MCF 10A (cell line): ENCODE measurements at regions of chr1 and their contacts with region 1.

Region 1: DNA sequence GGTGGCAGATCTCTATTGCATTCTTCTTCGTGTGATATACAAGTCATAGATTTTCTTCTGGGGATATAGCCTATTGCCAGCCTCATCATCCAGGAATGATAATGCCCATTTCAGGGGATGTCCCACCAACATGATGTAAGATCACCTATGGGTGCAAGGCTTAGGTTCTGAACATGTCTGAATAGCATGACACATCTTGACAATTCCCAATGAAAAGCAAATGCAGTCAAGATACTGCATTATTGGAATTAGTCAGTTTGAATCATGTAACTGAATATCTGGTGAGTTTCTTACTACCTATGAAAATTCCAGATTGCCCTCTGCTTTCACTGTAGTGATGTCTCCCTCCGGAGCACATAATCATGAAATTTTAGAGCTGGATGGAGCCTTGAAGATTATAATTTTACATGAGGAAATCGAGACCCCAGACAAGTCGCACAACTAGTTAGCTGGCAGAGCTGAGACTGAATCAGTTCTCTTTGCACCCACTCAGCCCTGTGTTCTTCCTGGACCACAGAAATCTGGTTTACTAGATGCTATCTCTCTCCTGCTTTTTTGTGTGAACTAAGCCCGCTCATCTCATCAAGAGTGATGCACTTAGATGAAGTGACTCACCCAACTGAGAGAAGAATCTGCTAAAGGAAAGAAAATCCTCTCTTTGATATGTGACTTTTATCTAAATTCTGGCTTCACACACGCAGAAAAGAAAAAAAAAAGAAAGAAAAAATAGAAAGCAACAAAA is 65.0 kb downstream of the WDR64 start:
- DNase-seq: no peak
- H3K4me3 Mint-ChIP-seq: no peak overlapping the region
- H3K27ac Mint-ChIP-seq: peak overlapping the region; percentile 93
- H3K4me1 Mint-ChIP-seq: peaks cover 48% of the 10 kb centered on the region
- H3K27me3 Mint-ChIP-seq: no peaks in the 10 kb centered on the region
- CTCF ChIP-seq: no peak

Region 2: GRCh38 chr1:241706954-241707365 is 10.1 kb before region 1 on chr1:
- CTCF ChIA-PET with region 1: interaction called, 7 read pairs
- POLR2A ChIA-PET with region 1: interaction called, 56 read pairs
- intact Hi-C with region 1: no loop called
- DNase-seq: peak; percentile 97
- H3K4me3 Mint-ChIP-seq: peak overlapping the region; percentile 12
- H3K27ac Mint-ChIP-seq: peak overlapping the region; percentile 85
- H3K4me1 Mint-ChIP-seq: peaks cover 37% of the 10 kb centered on the region
- H3K27me3 Mint-ChIP-seq: no peaks in the 10 kb centered on the region
- CTCF ChIP-seq: no peak

Region 3: GRCh38 chr1:241749901-241750695 is 33.0 kb after region 1 on chr1:
- CTCF ChIA-PET with region 1: interaction called, 6 read pairs
- POLR2A ChIA-PET with region 1: interaction called, 11 read pairs
- intact Hi-C with region 1: no loop called
- DNase-seq: no peak
- H3K4me3 Mint-ChIP-seq: peak overlapping the region; percentile 72
- H3K27ac Mint-ChIP-seq: peak overlapping the region; percentile 81
- H3K4me1 Mint-ChIP-seq: peaks cover 16% of the 10 kb centered on the region
- H3K27me3 Mint-ChIP-seq: no peaks in the 10 kb centered on the region
- CTCF ChIP-seq: no peak

Region 4: DNA sequence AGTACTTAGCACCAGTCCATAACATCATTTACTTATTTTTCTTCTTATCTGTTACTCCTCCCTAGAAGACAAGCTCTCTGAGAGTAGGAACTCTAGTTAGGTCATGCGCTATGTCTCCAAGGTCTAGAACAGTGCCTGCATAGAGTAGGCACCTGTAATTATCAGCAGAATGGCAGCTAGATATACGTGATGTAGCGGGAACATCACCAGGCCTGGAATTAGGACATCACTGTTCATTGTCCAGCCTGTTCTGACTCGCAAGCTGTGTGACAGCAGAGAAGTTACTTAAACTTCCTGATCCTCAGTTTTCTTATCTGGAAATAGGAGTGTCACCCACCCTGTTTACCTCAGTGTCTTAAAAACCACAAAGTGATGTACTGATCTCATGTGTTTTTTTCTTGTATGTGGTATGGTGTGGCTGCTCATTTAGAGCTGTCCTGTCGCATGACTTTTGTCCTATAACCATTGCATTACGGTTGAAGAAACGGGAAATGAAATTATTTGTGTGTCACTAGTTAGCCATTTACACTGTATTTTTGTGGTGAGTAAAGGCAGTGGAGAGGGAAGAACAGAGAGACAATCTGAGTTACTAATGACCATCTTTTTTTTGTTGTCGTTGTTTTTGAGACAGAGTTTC is 93.8 kb after region 1 on chr1:
- CTCF ChIA-PET with region 1: no interaction called
- POLR2A ChIA-PET with region 1: no interaction called
- intact Hi-C with region 1: no loop called
- DNase-seq: no peak
- H3K4me3 Mint-ChIP-seq: no peak overlapping the region
- H3K27ac Mint-ChIP-seq: no peak overlapping the region
- H3K4me1 Mint-ChIP-seq: peaks cover 15% of the 10 kb centered on the region
- H3K27me3 Mint-ChIP-seq: no peaks in the 10 kb centered on the region
- CTCF ChIP-seq: no peak